ENCODE measurements at regions of chr11 and their contacts with region 1.

Region 1: DNA sequence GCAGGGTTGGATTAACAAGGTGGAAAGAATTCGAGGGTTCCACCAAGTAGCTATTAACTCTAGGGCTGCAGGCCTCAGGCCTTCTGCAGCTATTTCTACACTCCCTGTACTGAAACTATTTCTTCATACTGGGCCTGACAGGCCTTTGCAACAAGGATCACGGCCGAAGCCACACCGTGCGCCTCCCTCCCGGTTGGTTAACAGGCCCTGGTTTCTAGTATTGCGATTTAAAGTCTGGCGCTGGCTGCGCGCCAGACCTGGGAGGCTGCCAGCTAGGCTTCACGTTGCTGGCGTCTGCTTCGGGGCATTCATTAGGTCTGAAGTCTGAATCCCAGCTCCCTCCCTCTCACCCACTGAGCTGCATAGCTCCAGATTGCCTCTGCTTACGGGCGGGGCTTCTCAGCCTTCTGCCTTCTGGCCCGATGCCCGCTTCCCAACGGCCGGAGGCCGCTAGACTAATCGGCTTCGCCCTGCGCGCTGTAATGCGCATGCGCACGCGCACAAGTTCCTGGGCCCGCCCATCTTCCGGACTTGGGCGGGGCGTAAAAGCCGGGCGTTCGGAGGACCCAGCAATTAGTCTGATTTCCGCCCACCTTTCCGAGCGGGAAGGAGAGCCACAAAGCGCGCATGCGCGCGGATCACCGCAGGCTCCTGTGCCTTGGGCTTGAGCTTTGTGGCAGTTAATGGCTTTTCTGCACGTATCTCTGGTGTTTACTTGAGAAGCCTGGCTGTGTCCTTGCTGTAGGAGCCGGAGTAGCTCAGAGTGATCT is 1.6 kb downstream of the LDHA start:
- DNase-seq: peak; percentile 94 to 98 (median 97)
- H3K4me3 ChIP-seq: peak overlapping the region; percentile 72 to 98
- H3K4me3 Mint-ChIP-seq: peak overlapping the region; percentile 98 to 99 (median 98)
- H3K27ac ChIP-seq: peak overlapping the region; percentile 88
- H3K27ac Mint-ChIP-seq: peak overlapping the region; percentile 97 to 99 (median 98)
- H3K4me1 ChIP-seq: peaks cover 43% of the 10 kb centered on the region
- H3K4me1 Mint-ChIP-seq: peaks cover 17 to 71% (median 29%) of the 10 kb centered on the region in 4 donors
- H3K27me3 ChIP-seq: no peaks in the 10 kb centered on the region
- H3K27me3 Mint-ChIP-seq: peaks cover 0 to 2% of the 10 kb centered on the region in 2 donors

Region 2: DNA sequence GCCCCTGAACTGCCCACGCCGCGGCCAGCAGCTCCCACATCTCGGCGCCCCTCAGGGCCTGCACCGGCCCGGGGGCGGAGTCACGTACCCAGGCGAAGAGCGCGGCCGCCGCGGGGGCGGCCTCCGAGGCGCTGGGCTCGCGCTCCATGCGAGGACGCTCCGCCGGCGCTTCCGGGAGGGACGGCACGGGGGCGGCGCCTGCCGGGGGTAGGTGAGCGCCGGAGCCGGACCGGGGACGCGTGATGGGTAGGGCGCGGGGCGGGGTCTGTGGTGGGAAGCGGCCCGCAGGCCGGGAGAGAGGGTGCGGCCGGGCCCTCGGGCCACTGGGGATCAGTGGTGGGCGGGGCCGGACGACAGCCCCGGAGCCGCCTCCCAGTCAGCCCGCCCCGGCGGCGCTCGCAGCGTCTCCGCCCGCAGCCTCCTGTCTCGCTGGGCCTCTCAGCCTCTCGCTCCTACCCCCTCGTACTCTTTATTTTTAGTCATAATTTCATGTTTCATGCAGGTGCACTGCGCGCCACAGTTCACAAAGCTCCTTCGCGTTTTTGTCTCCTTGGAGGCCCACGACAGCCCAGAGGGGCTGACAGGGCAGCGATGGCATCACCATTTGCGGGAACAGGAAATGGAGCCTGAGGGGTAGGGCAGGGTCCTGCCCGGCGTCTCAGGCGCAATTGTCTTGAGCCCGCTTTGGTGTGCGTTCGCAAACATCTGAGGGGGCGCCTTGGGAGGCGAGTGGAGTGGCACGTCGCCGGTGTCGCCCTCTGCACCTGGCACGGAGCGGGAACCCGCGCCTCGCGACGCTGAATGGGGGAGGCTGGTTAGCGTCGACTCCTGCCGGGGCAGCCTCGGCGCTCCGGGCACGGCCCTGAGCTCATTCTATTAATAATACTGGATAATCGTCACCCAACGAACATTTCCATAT is 382.8 kb before region 1 on chr11 and contains the start of gene SERGEF:
- CTCF ChIA-PET with region 1: no interaction called
- POLR2A ChIA-PET with region 1: interaction called, 17 read pairs
- intact Hi-C with region 1: no loop called
- DNase-seq: peak; percentile 91 to 92 (median 91)
- H3K4me3 ChIP-seq: peak within 1 kb of the TSS; percentile 72 to 94
- H3K4me3 Mint-ChIP-seq: peak within 1 kb of the TSS; percentile 93 to 99 (median 96)
- H3K27ac ChIP-seq: peak within 1 kb of the TSS; percentile 73
- H3K27ac Mint-ChIP-seq: peak within 1 kb of the TSS; percentile 94 to 100 (median 98)
- H3K4me1 ChIP-seq: peaks cover 19% of the 10 kb centered on the region
- H3K4me1 Mint-ChIP-seq: peaks cover 18 to 41% (median 26%) of the 10 kb centered on the region in 4 donors
- H3K27me3 ChIP-seq: no peaks in the 10 kb centered on the region
- H3K27me3 Mint-ChIP-seq: no peaks in the 10 kb centered on the region
- total RNA-seq, gene SERGEF: 46.2 to 54.1 TPM

Region 3: DNA sequence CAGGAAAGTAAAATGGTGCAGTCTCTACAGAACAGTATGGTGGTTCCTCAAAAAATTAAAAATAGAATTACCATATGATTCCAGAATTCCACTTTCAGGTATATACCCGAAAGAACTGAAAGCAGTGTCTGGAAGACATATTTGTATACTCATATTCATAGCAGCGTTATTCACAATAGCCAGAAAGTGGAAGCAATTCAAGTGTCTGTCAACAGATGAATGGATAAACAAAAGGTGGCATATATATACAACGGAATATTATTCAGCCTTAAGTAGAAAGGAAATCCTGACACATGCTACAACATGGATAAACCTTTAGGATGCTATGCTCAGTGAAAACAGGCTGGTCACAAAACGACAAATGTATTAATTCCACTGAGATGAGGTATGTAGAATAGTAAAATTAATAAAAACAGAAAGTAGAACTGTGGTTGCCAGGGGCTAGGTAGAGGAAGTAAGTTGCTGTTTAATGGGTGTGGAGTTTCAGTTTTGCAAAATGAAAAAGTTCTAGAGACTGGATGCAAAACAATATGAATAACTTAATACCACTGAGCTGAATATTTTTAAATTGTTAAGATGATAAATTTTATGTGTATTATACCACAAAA is 115.4 kb before region 1 on chr11:
- CTCF ChIA-PET with region 1: no interaction called
- POLR2A ChIA-PET with region 1: no interaction called
- intact Hi-C with region 1: no loop called
- DNase-seq: no peak
- H3K4me3 ChIP-seq: no peak overlapping the region
- H3K4me3 Mint-ChIP-seq: peak overlapping the region in 6 of 8 donors; percentile 26 to 85 (median 68)
- H3K27ac ChIP-seq: no peak overlapping the region
- H3K27ac Mint-ChIP-seq: peak overlapping the region; percentile 4 to 88 (median 62)
- H3K4me1 ChIP-seq: peaks cover 6% of the 10 kb centered on the region
- H3K4me1 Mint-ChIP-seq: peaks cover 6 to 17% (median 12%) of the 10 kb centered on the region in 4 donors
- H3K27me3 ChIP-seq: no peaks in the 10 kb centered on the region
- H3K27me3 Mint-ChIP-seq: no peaks in the 10 kb centered on the region

Region 4: GRCh38 chr11:18321980-18322711 is 73.8 kb before region 1 on chr11 and contains the starts of genes GTF2H1 and HPS5:
- CTCF ChIA-PET with region 1: interaction called, 6 read pairs
- POLR2A ChIA-PET with region 1: interaction called, 171 read pairs
- intact Hi-C with region 1: loop called (anchors 1 kb)
- DNase-seq: peak; percentile 97 to 99 (median 98)
- H3K4me3 ChIP-seq: peak within 1 kb of the TSS; percentile 72 to 93
- H3K4me3 Mint-ChIP-seq: peak within 1 kb of the TSS; percentile 96 to 99 (median 98)
- H3K27ac ChIP-seq: peak within 1 kb of the TSS; percentile 99
- H3K27ac Mint-ChIP-seq: peak within 1 kb of the TSS; percentile 99 to 100 (median 100)
- H3K4me1 ChIP-seq: peaks cover 65% of the 10 kb centered on the region
- H3K4me1 Mint-ChIP-seq: peaks cover 50 to 86% (median 66%) of the 10 kb centered on the region in 4 donors
- H3K27me3 ChIP-seq: no peaks in the 10 kb centered on the region
- H3K27me3 Mint-ChIP-seq: no peaks in the 10 kb centered on the region
- total RNA-seq, gene GTF2H1: 60.1 to 61.6 TPM
- total RNA-seq, gene HPS5: 22.1 to 23.7 TPM

Region 5: DNA sequence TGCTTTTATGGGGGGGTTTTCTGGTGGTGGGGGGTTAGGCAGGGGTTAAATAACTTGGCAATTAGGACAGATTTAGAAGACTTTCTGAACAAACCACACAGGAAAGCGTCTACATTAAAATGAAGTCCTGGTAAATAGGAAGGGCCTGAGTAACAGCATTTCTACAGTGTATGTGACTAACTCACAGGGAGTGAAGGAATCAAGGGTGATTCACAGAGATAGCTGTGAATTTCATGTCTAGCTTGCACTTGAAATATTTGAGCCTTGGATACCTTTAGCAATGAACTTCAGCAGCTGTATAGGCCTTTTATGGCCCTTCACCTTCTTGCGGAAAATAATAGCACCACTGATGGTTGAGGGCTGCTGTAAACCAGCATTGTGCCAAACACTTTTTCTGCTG is 27.7 kb before region 1 on chr11:
- CTCF ChIA-PET with region 1: interaction called, 3 read pairs
- POLR2A ChIA-PET with region 1: interaction called, 17 read pairs
- intact Hi-C with region 1: loop called (anchors 2 kb)
- DNase-seq: no peak
- H3K4me3 ChIP-seq: no peak overlapping the region
- H3K4me3 Mint-ChIP-seq: no peak overlapping the region
- H3K27ac ChIP-seq: no peak overlapping the region
- H3K27ac Mint-ChIP-seq: peak overlapping the region in 6 of 7 donors; percentile 0 to 82 (median 60)
- H3K4me1 ChIP-seq: no peaks in the 10 kb centered on the region
- H3K4me1 Mint-ChIP-seq: peaks cover 11 to 18% (median 14%) of the 10 kb centered on the region in 4 donors
- H3K27me3 ChIP-seq: no peaks in the 10 kb centered on the region
- H3K27me3 Mint-ChIP-seq: no peaks in the 10 kb centered on the region

Region 6: DNA sequence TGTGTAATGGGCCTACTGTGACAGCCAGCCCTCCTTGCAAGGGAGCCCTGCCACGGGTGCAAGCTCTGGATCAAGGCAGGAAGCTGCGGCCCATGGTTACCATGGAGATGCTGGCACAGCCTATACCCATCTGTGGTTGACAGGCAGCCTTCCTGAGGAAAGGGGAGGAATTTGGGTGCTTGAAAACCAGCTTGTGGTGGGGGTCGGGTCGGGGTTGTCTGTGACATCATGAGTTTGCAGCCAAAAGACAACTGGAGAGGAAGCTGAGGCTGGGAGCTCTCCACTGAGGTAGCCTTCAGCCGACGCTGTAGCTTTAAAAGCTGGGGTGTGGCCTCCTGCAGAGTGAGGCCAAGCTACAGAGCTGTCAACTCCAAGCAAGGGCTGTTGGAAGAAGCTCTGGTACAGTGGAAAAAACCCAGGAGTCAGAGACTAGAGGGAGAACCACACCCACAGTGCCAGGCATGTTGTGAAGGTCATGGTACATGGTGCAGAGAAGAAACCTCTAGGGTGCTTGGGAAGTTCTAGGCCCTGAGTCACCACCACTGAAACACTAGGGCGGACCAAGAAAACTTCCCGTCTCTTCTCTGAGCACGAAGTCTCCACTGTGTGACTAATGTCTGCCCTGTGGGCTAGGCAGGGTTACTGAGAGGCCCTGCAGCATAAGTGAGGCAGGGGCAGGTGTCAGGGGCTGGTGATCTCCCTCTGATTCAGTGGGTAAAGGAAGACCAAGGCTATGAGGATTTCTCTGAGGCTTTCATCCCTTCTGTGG is 12.3 kb before region 1 on chr11:
- CTCF ChIA-PET with region 1: interaction called, 48 read pairs
- POLR2A ChIA-PET with region 1: interaction called, 266 read pairs
- intact Hi-C with region 1: loop called (anchors 1 kb)
- DNase-seq: peak; percentile 76 to 89 (median 81)
- H3K4me3 ChIP-seq: peak overlapping the region; percentile 29 to 32
- H3K4me3 Mint-ChIP-seq: peak overlapping the region; percentile 67 to 87 (median 82)
- H3K27ac ChIP-seq: peak overlapping the region; percentile 71
- H3K27ac Mint-ChIP-seq: peak overlapping the region; percentile 96 to 99 (median 98)
- H3K4me1 ChIP-seq: peaks cover 51% of the 10 kb centered on the region
- H3K4me1 Mint-ChIP-seq: peaks cover 30 to 51% (median 40%) of the 10 kb centered on the region in 4 donors
- H3K27me3 ChIP-seq: no peaks in the 10 kb centered on the region
- H3K27me3 Mint-ChIP-seq: no peaks in the 10 kb centered on the region

Measured in CD4-positive, alpha-beta memory T cell (primary cell).